Endothelial cell of umbilical vein (primary cell): ENCODE measurements at regions of chr15 and their contacts with region 1.

Region 1: DNA sequence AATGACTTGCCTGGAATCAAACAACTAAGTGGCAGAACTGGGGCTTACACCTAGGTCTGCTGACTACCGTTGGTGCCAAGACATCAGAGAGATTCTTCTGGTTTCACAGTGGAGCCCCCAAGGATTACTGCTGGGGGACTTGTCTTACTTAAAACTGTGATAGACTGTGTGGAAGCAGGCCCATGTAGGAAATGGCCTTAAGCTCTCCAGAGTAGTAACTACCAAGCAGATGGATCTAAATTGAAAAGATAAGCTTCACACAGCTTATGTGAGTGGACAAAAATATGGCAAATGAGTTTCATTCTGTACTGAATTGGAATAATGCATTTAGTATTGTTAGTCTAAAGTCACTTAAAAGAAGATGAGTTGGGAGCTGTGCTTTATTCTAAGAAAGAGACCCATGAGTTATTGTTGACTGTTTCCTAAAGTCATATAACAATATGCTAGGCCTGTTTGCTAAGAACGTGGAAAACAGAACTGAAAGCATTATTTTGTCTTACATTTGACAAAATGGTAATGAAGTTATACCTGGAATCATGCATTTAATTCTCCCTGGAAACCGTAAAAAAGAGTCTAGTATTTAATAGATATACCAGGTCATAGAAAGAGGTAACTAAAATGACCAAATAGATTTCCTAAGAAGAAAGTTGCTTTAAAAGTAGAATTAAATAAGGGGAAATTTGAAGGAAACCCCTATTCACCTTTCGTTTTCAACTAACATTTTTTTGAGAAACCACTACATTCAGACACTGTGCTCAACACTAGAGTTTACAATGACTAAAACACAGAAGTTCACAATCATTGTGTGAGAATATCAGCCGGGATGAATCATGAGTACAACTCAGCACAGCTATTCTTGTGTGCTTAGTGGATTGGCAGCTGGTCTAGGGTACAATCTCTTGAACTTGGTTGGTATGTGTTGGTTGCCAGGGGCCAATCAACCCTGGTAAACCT is 13.0 kb upstream of the MAPK6 start:
- DNase-seq: peak; percentile 87
- H3K4me3 ChIP-seq: no peak overlapping the region
- H3K27ac ChIP-seq: peak overlapping the region; percentile 80
- H3K4me1 ChIP-seq: peaks cover 46% of the 10 kb centered on the region
- H3K27me3 ChIP-seq: no peaks in the 10 kb centered on the region
- CTCF ChIP-seq: no peak
- POLR2A ChIP-seq: no peak

Region 2: GRCh38 chr15:51971375-51972133 is 34.5 kb before region 1 on chr15 and contains the start of gene LEO1:
- CTCF ChIA-PET with region 1: no interaction called
- POLR2A ChIA-PET with region 1: interaction called, 13 read pairs
- dilution Hi-C with region 1: no loop called
- intact Hi-C with region 1: no loop called
- DNase-seq: peak; percentile 97
- H3K4me3 ChIP-seq: peak within 1 kb of the TSS; percentile 54 to 81 (median 61)
- H3K27ac ChIP-seq: peak within 1 kb of the TSS; percentile 68
- H3K4me1 ChIP-seq: peaks cover 12% of the 10 kb centered on the region
- H3K27me3 ChIP-seq: no peaks in the 10 kb centered on the region
- CTCF ChIP-seq: peak in 1 of 2 donors; percentile 42
- POLR2A ChIP-seq: peak; percentile 92
- total RNA-seq, gene LEO1: 22.6 and 28.0 TPM in 2 replicates

Region 3: DNA sequence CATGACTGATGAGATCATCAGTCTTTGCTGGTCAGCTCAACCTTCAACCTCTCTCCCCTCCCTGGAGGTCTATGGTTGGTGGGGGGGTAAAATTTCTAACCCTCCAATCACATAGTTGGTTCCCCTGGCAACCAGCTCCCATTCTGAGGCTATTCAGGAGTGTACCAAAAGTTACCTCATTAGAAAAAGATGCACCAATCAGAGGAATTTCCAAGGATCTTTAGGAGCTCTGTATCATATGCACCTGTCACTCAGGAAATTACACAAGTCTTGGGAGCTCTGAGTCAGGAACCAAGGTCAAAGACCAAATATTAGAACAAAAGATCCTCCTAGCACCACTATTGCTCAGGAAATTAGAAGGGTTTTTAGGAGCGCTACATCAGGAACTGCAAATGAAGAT is 13.0 kb before region 1 on chr15:
- CTCF ChIA-PET with region 1: interaction called, 10 read pairs
- POLR2A ChIA-PET with region 1: no interaction called
- dilution Hi-C with region 1: no loop called
- intact Hi-C with region 1: loop called (anchors 1 kb)
- DNase-seq: peak; percentile 74
- H3K4me3 ChIP-seq: peak overlapping the region in 1 of 3 experiments; percentile 12
- H3K27ac ChIP-seq: peak overlapping the region; percentile 27
- H3K4me1 ChIP-seq: peaks cover 20% of the 10 kb centered on the region
- H3K27me3 ChIP-seq: no peaks in the 10 kb centered on the region
- CTCF ChIP-seq: no peak
- POLR2A ChIP-seq: no peak

Region 4: GRCh38 chr15:52100807-52101206 is 94.8 kb after region 1 on chr15:
- CTCF ChIA-PET with region 1: no interaction called
- POLR2A ChIA-PET with region 1: no interaction called
- dilution Hi-C with region 1: no loop called
- intact Hi-C with region 1: no loop called
- DNase-seq: peak; percentile 94
- H3K4me3 ChIP-seq: no peak overlapping the region
- H3K27ac ChIP-seq: no peak overlapping the region
- H3K4me1 ChIP-seq: peaks cover 22% of the 10 kb centered on the region
- H3K27me3 ChIP-seq: no peaks in the 10 kb centered on the region
- CTCF ChIP-seq: no peak
- POLR2A ChIP-seq: no peak